Right ventricle myocardium superior (tissue), 1 donor: ENCODE measurements at regions of chr7 and their contacts with region 1.

Region 1: DNA sequence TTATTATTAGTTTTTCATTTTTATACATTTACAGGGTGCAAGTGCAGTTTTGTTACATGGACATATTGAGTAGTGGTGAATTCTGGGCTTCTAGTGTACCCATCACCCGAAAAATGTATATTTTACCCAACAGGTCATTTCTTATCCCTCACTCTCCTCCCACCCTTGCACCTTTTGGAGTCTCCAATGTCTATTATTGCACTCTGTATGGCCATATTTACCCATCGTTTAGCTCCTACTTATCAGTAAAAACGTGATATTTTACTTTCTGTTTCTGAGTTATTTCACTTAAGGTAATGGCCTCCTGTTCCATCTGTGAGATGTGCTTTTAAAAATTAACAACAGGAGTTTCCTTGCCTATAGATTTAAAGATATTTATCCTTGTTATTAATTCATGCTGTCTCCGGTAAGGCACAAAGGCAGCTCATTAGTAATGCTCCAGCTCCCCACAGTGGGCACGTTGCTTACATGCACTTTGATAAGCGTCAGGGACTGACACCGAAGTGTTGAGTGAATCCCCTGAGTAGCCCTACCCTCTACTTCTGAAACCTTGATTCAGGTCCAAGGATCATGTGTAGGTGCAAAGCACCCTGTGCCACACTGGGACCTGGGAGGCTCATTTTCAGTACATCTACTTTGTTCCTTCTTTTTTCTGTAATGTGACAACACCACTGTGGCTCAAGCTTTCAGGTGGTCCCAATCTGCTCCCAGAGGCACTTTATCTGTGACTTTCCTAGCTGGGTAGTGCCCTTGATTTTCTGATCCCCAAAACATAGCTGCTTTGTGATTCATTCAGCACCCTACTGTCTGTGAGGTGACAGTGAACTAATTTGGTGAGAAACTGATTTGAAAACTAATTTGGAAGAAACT is 27.3 kb downstream of the HYAL4 start:
- DNase-seq: peak; percentile 40
- ATAC-seq: peak; percentile 92

Region 2: DNA sequence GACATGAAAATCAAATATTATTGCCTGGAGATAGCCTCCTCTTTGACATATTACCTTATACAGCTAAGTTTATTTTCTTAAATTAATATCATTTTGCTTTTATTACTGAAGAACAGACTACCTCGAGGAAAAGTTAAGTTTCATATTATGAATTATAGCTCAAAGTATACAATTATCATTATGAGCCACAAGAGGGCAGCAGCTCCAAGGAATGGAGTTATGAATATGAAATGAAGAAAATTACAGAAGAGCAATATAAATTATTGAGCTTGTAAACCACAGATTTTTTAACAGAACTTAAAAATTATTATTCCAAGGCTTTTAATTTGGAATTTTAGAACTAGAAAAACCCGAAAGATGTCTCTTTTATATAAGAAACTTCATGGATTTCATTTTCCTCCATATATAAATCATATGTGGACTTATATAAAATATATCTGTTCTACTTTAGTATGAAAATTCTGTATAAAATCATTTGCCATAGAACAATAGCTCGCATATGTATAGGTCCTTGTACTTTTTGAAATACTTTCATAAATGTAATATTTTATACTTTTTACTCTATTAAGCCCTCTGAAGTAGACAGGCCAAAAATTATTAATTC is 377.9 kb before region 1 on chr7:
- intact Hi-C with region 1: loop called (anchors 5 kb)
- DNase-seq: no peak
- ATAC-seq: no peak

Region 3: GRCh38 chr7:123738356-123738755 is 133.9 kb before region 1 on chr7:
- intact Hi-C with region 1: no loop called
- DNase-seq: no peak
- ATAC-seq: no peak

Region 4: DNA sequence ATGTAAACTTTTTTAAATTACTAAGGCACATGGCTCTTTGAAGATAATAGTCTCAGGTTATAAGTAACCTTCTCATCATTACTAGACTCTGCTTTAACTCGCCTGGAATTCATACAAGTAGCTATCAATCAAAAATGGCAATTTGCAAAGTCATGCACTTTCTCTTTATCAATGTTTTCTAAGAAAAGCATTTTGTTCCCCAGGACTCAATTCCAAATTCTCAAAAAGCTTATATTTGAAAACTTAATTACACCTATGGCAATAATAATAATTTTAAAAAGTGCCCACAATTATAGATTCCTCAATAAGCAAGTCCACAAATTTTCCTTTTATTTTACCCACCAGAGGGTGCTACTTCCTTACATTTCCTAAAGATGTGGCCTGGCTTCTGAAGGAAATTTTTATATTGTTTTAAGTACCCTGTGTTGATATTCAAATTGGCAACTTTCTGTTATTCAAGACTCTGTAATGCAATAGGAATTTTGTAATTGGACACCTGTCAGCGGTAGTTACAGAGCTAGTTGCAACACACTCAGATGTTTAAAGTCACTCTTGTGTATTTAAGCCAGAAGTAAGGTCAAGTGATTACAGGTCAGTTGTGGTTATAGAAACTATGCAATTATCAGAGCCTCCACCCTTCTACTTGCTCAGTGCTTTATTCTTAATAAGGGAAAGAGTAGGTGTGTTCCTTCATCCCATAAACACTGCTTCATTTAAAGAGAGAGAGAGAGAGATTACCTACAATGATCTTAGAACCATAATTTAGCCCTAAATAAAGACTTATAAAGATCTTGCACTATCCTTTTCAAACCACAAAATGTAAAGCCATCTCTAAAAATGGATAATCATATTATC is 74.3 kb before region 1 on chr7:
- intact Hi-C with region 1: loop called (anchors 5 kb)
- DNase-seq: no peak
- ATAC-seq: peak; percentile 65